ENCODE measurements at regions of chr9 and their contacts with region 1.

Region 1: GRCh38 chr9:73200694-73201452 is 49.2 kb downstream of the ANXA1 start:
- DNase-seq: no peak
- H3K4me3 ChIP-seq: no peak overlapping the region
- H3K27ac ChIP-seq: no peak overlapping the region
- H3K4me1 ChIP-seq: no peaks in the 10 kb centered on the region
- H3K27me3 ChIP-seq: no peaks in the 10 kb centered on the region
- CTCF ChIP-seq: peak; percentile 35

Region 2: GRCh38 chr9:74570879-74571512 is 1370.1 kb after region 1 on chr9:
- intact Hi-C with region 1: loop called (anchors 10 kb)
- DNase-seq: peak; percentile 18
- H3K4me3 ChIP-seq: no peak overlapping the region
- H3K27ac ChIP-seq: no peak overlapping the region
- H3K4me1 ChIP-seq: no peaks in the 10 kb centered on the region
- H3K27me3 ChIP-seq: no peaks in the 10 kb centered on the region
- CTCF ChIP-seq: peak; percentile 70

Measured in colonic mucosa (tissue), 4 donors.